Panc1 (cell line): ENCODE measurements at regions of chr10 and their contacts with region 1.

Region 1: DNA sequence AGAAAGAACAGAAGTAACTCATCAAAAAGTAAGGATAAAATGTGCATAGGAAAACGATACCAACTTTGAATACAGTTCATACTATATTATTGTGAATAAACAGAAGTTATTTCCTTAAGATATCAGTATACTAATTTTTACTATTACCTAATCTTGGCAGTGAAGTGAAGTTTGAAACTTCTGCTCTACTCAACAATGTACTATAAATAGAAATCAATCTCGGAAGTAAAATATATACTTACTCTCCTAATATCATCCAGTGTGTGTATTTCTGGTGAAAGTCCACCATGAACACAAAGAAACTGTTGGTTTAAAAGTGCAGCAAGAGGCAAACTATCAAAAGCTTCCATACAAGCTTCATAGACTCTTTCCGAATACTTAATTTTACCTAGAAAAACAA is 24.6 kb downstream of the PPP3CB start:
- DNase-seq: no peak
- ATAC-seq: no peak
- H3K4me3 ChIP-seq: no peak overlapping the region
- H3K27ac ChIP-seq: no peak overlapping the region
- H3K4me1 ChIP-seq: no peaks in the 10 kb centered on the region
- H3K27me3 ChIP-seq: no peaks in the 10 kb centered on the region
- CTCF ChIP-seq: no peak

Region 2: GRCh38 chr10:73413528-73414229 is 57.5 kb before region 1 on chr10 and contains the start of gene ANXA7:
- CTCF ChIA-PET with region 1: no interaction called
- POLR2A ChIA-PET with region 1: no interaction called
- in situ Hi-C with region 1: no loop called
- intact Hi-C with region 1: no loop called
- DNase-seq: peak; percentile 41
- ATAC-seq: peak; percentile 99
- H3K4me3 ChIP-seq: peak within 1 kb of the TSS; percentile 76 to 91
- H3K27ac ChIP-seq: peak within 1 kb of the TSS; percentile 87
- H3K4me1 ChIP-seq: peaks cover 6% of the 10 kb centered on the region; the same call in 1 of the 2 replicates
- H3K27me3 ChIP-seq: no peaks in the 10 kb centered on the region
- CTCF ChIP-seq: no peak
- total RNA-seq, gene ANXA7: 165 TPM

Region 3: GRCh38 chr10:73609116-73609515 is 137.9 kb after region 1 on chr10:
- CTCF ChIA-PET with region 1: no interaction called
- POLR2A ChIA-PET with region 1: interaction called, 17 read pairs
- in situ Hi-C with region 1: no loop called
- intact Hi-C with region 1: no loop called
- DNase-seq: no peak
- ATAC-seq: no peak
- H3K4me3 ChIP-seq: no peak overlapping the region
- H3K27ac ChIP-seq: no peak overlapping the region
- H3K4me1 ChIP-seq: no peaks in the 10 kb centered on the region
- H3K27me3 ChIP-seq: no peaks in the 10 kb centered on the region
- CTCF ChIP-seq: no peak